Naive thymus-derived CD4-positive, alpha-beta T cell (primary cell): ENCODE measurements at regions of chr20 and their contacts with region 1.

Region 1: DNA sequence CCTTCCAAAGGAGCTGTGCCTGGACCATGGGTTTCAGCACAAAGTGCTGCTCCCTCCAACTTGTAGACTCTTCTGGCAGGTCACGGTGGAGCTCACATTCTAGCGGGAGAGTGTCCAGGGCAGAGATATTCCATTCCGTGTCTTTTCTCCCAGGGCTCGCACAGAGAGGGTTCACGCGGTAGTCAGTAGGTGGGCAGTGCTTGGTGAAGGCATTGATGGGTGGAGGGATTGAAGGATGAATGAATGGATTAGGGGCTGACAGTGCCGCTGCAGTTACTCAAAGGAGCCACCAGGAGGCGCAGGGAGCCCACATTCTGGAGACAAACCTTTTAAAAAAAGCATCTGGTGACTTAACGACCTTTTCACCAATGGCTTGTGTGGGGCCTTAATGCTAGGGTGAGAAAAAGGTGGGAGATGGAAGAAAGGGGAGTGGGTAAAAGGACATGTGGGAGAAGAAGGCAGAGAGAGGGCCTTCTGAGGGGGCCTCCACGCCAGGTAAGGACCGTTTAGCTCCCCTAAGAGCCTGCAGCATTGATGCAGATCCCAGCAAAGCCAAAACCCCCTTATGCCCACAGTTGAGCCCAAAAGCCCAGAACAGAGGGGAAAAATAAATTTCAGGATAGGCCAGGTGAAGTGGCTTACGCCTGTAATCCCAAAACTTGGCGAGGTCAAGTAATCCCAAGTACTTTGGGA is 17.5 kb upstream of the FAM110A start:
- DNase-seq: peak; percentile 47 to 73 (median 64)
- ATAC-seq: peak; percentile 69
- H3K4me3 ChIP-seq: no peak overlapping the region
- H3K4me3 Mint-ChIP-seq: no peak overlapping the region
- H3K27ac ChIP-seq: no peak overlapping the region
- H3K27ac Mint-ChIP-seq: peak overlapping the region in 4 of 9 donors; percentile 1 to 57 (median 31)
- H3K4me1 ChIP-seq: no peaks in the 10 kb centered on the region
- H3K4me1 Mint-ChIP-seq: peaks cover 5 to 13% (median 9%) of the 10 kb centered on the region in 7 donors
- H3K27me3 ChIP-seq: no peaks in the 10 kb centered on the region
- H3K27me3 Mint-ChIP-seq: peaks cover 9 to 27% (median 14%) of the 10 kb centered on the region in 5 donors

Region 2: GRCh38 chr20:844473-845225 is 28.6 kb after region 1 on chr20:
- CTCF ChIA-PET with region 1: interaction called, 4 read pairs
- POLR2A ChIA-PET with region 1: no interaction called
- intact Hi-C with region 1: loop called in 1 of 2 experiments (anchors 1 kb)
- DNase-seq: peak; percentile 55 to 95 (median 83)
- ATAC-seq: peak; percentile 98
- H3K4me3 ChIP-seq: peak overlapping the region; percentile 75
- H3K4me3 Mint-ChIP-seq: peak overlapping the region; percentile 88 to 97 (median 94)
- H3K27ac ChIP-seq: peak overlapping the region; percentile 70
- H3K27ac Mint-ChIP-seq: peak overlapping the region in 8 of 9 donors; percentile 70 to 93 (median 86)
- H3K4me1 ChIP-seq: peaks cover 40 to 45% of the 10 kb centered on the region in 2 donors
- H3K4me1 Mint-ChIP-seq: peaks cover 30 to 58% (median 52%) of the 10 kb centered on the region in 7 donors
- H3K27me3 ChIP-seq: no peaks in the 10 kb centered on the region
- H3K27me3 Mint-ChIP-seq: no peaks in the 10 kb centered on the region

Region 3: DNA sequence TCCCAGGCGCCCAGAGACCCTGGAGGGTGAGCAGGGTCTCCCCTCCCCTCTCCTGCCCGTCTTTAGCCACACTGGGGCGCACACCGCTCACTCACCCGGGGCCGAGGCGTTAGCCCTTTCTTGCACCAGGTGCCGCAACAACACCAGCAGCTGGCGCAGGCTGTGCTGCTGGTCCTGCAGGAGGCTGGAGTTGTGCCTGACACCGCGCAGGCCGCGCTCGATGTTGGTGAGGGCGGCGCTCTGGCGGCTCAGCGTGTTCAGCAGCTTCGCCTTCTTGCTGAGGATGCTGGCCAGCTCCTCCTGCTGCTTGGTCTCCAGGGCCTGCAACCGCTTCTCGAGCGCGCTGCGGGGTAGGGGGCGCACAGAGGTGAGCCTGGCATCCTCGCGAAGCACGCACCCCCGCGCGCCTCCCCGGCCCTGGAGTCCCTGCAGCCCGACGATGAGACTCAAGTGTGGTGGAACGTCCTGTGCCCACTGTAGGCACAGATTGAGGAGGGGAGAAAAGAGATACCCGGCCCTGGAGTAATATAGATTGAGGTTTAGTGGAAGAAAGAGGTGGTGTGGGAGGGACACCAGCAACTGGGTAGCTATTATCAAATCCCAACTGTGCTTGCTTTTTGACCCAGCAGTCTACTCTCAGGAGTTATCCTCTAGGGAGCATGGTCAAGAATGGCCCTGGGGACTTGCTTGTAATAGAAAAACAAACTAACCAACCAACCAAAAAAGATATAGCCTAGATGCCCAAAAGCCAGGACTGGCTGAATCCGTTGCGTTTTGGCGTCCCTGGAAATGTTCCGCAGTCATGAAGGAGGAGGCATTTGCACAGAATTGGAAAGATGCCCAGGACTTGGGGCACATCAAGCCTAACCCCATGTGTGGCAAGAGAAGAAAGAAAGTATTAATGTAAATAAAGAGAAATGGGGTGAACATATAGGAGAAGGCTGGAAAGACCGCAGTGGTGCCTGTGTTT is 69.2 kb after region 1 on chr20:
- CTCF ChIA-PET with region 1: interaction called, 3 read pairs
- POLR2A ChIA-PET with region 1: no interaction called
- intact Hi-C with region 1: loop called in 1 of 2 experiments (anchors 1 kb)
- DNase-seq: peak in 2 of 9 donors; percentile 7 to 8
- ATAC-seq: no peak
- H3K4me3 ChIP-seq: no peak overlapping the region
- H3K4me3 Mint-ChIP-seq: no peak overlapping the region
- H3K27ac ChIP-seq: no peak overlapping the region
- H3K27ac Mint-ChIP-seq: no peak overlapping the region
- H3K4me1 ChIP-seq: no peaks in the 10 kb centered on the region
- H3K4me1 Mint-ChIP-seq: peaks cover 0 to 15% (median 5%) of the 10 kb centered on the region in 7 donors
- H3K27me3 ChIP-seq: no peaks in the 10 kb centered on the region
- H3K27me3 Mint-ChIP-seq: peaks cover 10 to 28% (median 17%) of the 10 kb centered on the region in 5 donors

Region 4: GRCh38 chr20:956330-956951 is 140.4 kb after region 1 on chr20:
- CTCF ChIA-PET with region 1: interaction called, 132 read pairs
- POLR2A ChIA-PET with region 1: interaction called, 4 read pairs
- intact Hi-C with region 1: loop called (anchors 1 kb)
- DNase-seq: peak; percentile 48 to 80 (median 69)
- ATAC-seq: peak; percentile 85
- H3K4me3 ChIP-seq: no peak overlapping the region
- H3K4me3 Mint-ChIP-seq: no peak overlapping the region
- H3K27ac ChIP-seq: no peak overlapping the region
- H3K27ac Mint-ChIP-seq: no peak overlapping the region
- H3K4me1 ChIP-seq: no peaks in the 10 kb centered on the region
- H3K4me1 Mint-ChIP-seq: peaks cover 0 to 8% (median 0%) of the 10 kb centered on the region in 7 donors
- H3K27me3 ChIP-seq: no peaks in the 10 kb centered on the region
- H3K27me3 Mint-ChIP-seq: peaks cover 18 to 55% (median 39%) of the 10 kb centered on the region in 5 donors

Region 5: DNA sequence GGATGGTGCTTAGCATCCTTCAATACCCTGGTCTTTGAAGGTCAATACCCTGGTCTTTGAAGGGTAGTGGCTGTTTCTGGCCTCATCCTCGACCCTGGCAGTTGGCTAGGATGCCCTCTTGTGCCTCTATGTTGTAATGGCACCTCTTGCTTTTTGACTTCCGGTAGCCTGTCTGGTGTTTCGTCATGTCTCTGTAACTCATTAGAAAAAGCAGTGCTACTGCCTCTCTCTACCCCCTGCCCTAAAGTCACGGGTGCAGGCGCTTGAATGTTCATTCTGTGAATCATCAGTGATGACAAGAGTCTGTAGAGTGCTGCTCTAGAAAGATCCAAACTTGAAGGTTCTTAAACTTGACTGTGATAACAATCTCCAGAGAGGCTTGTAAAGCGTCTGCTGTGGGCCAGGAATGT is 157.7 kb after region 1 on chr20:
- CTCF ChIA-PET with region 1: no interaction called
- POLR2A ChIA-PET with region 1: no interaction called
- intact Hi-C with region 1: loop called in 1 of 2 experiments (anchors 1 kb)
- DNase-seq: peak in 5 of 9 donors; percentile 13 to 39 (median 26)
- ATAC-seq: peak; percentile 82
- H3K4me3 ChIP-seq: no peak overlapping the region
- H3K4me3 Mint-ChIP-seq: no peak overlapping the region
- H3K27ac ChIP-seq: no peak overlapping the region
- H3K27ac Mint-ChIP-seq: peak overlapping the region in 1 of 9 donors; percentile 37
- H3K4me1 ChIP-seq: no peaks in the 10 kb centered on the region
- H3K4me1 Mint-ChIP-seq: peaks cover 0 to 4% (median 2%) of the 10 kb centered on the region in 7 donors
- H3K27me3 ChIP-seq: no peaks in the 10 kb centered on the region
- H3K27me3 Mint-ChIP-seq: peaks cover 0 to 7% (median 0%) of the 10 kb centered on the region in 5 donors

Region 6: DNA sequence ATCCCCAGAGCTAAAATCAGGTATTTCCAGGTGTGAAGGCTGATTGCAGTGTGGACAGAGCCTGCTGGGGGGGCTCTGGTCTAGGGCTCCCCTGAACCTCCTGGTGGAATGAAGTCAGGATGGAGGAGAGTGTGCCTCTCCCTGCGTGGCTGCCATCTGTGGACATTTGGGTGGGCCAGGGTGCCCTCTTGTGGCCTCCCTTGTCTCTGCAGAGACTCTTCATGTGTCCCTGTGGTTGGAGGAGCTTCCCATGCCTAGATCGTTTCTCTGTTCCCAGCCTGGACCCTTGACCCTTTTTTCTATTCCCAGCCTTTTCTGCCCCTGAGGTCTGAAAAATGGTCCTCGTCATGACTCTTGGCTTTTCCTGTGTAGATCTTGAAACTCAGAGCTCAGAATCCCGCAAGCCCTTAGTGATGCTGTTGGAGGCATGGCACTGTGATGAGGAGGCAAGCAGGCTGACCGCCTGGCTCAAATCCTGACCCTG is 292.4 kb after region 1 on chr20:
- CTCF ChIA-PET with region 1: no interaction called
- POLR2A ChIA-PET with region 1: no interaction called
- intact Hi-C with region 1: loop called (anchors 1 to 5 kb)
- DNase-seq: peak in 8 of 9 donors; percentile 18 to 51 (median 43)
- ATAC-seq: peak; percentile 87
- H3K4me3 ChIP-seq: no peak overlapping the region
- H3K4me3 Mint-ChIP-seq: no peak overlapping the region
- H3K27ac ChIP-seq: no peak overlapping the region
- H3K27ac Mint-ChIP-seq: peak overlapping the region in 1 of 9 donors; percentile 60
- H3K4me1 ChIP-seq: no peaks in the 10 kb centered on the region
- H3K4me1 Mint-ChIP-seq: peaks cover 5 to 7% (median 6%) of the 10 kb centered on the region in 7 donors
- H3K27me3 ChIP-seq: no peaks in the 10 kb centered on the region
- H3K27me3 Mint-ChIP-seq: peaks cover 0 to 10% (median 0%) of the 10 kb centered on the region in 5 donors